ENCODE measurements at regions of chr6 and their contacts with region 1.

Region 1: DNA sequence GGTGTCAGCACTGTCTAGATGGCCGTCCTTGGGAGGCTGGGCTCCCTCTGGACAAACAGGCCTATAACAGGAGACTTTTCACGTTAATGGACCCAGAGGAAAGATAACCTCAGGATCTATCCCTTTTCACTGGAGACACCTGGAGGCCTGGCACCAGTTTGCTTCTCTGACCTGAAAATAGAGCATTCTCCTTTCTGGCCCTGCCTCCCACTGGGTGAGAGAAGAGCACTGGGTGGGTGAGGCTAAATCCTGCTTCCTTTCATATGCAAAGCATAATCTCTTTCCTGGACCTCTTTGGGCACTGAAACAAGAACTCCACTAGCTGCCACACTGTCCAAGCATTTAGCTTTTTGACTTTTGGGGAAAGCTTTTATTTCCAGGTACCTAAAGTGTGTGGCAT is 78.3 kb downstream of the FOXO3 start:
- DNase-seq: no peak
- H3K4me3 ChIP-seq: no peak overlapping the region
- H3K27ac ChIP-seq: no peak overlapping the region
- H3K4me1 ChIP-seq: 0 out of 2 replicates have a peak, but pooled peaks cover 6% of the 10 kb centered on the region
- H3K27me3 ChIP-seq: no peaks in the 10 kb centered on the region
- CTCF ChIP-seq: no peak

Region 2: DNA sequence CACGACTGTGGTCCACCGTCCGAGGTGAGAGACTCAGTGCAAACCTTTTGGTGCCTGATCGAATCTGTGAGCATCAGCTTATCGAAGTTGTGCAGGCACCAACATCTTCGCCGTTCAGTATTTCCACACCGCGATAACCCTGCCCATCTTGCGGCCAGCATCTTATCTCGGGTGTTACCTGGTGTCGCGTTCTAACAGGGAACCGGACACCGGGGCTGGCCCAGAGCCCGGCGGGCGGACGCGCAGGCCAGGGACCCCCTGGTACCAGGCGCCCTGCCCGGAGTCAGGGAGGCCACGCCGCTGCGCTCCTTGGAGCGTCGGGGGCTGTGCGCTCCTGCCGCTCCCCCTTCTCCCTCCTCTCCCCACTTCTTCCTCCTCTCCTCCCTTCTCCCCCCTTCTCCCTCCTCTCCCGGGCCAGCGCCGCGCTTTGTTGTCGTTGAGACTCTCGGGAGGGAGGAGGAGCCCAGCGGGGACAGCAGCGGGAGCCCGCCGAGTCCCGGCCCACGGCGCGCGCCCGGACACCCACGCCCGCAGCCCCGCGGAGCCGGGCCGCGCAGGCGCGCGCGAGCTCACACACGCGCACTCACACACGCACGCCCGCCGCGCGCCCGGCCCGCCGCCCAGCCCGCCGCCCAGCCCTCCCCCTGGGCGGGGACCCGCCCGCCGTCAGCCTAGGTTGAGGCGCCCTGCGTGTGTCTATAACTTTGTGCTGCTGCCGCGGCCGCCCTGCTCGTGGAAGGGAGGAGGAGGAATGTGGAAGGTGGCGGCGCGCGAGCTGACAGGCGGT is 79.7 kb before region 1 on chr6:
- CTCF ChIA-PET with region 1: no interaction called
- POLR2A ChIA-PET with region 1: no interaction called
- intact Hi-C with region 1: no loop called
- DNase-seq: peak; percentile 71 to 83
- H3K4me3 ChIP-seq: peak overlapping the region; percentile 99
- H3K27ac ChIP-seq: peak overlapping the region; percentile 65
- H3K4me1 ChIP-seq: peaks cover 16% of the 10 kb centered on the region
- H3K27me3 ChIP-seq: no peaks in the 10 kb centered on the region
- CTCF ChIP-seq: no peak

Region 3: DNA sequence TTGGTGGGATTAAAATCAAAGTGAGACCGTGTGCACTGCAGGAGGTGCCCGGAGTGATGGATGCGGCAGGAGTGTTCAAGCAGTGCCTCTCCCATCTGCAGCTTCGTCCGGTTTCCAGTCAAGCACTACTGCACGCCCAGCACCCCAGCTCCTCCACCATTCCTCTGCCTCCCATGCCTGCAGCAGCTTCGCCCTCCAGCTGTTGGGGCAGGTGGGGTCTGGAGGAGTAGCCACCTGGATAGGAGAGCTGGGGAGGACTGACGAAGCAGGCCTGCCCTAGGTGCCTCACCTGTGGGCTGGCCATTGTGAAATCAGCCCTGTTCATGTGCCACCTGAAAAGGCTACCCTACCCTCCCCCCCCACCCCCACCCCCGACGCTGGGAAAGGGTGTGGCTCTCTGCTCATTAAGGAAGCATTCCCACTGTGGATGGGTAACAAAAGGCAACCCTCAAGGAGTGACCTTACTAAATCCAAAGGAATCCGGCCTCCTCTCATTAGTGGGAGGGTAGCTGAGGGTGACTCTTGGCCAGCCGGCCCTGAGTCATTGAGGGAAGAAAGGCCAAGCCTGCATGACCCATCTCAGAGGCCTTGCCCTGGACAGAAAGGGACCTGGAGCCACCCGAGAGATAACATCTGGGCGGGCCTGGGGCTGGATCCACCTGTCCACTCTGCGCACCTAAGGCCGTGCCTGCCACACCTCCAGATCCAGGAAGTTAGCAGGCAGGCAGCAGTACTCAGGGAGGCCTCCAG is 93.3 kb after region 1 on chr6:
- CTCF ChIA-PET with region 1: no interaction called
- POLR2A ChIA-PET with region 1: no interaction called
- intact Hi-C with region 1: no loop called
- DNase-seq: peak; percentile 96 to 100
- H3K4me3 ChIP-seq: peak overlapping the region; percentile 46; the same call in 1 of the 2 replicates
- H3K27ac ChIP-seq: peak overlapping the region; percentile 99
- H3K4me1 ChIP-seq: peaks cover 71% of the 10 kb centered on the region
- H3K27me3 ChIP-seq: no peaks in the 10 kb centered on the region
- CTCF ChIP-seq: no peak

Region 4: GRCh38 chr6:108914235-108915022 is 275.4 kb after region 1 on chr6:
- CTCF ChIA-PET with region 1: interaction called, 23 read pairs
- POLR2A ChIA-PET with region 1: no interaction called
- intact Hi-C with region 1: no loop called
- DNase-seq: no peak
- H3K4me3 ChIP-seq: no peak overlapping the region
- H3K27ac ChIP-seq: no peak overlapping the region
- H3K4me1 ChIP-seq: peaks cover 9% of the 10 kb centered on the region
- H3K27me3 ChIP-seq: no peaks in the 10 kb centered on the region
- CTCF ChIP-seq: peak; percentile 80

Region 5: GRCh38 chr6:109187399-109188114 is 548.6 kb after region 1 on chr6:
- CTCF ChIA-PET with region 1: no interaction called
- POLR2A ChIA-PET with region 1: no interaction called
- intact Hi-C with region 1: no loop called
- DNase-seq: peak; percentile 52 to 60
- H3K4me3 ChIP-seq: no peak overlapping the region
- H3K27ac ChIP-seq: no peak overlapping the region
- H3K4me1 ChIP-seq: no peaks in the 10 kb centered on the region
- H3K27me3 ChIP-seq: no peaks in the 10 kb centered on the region
- CTCF ChIP-seq: peak; percentile 98

Measured in PC-9 (cell line).